T-cell (primary cell): ENCODE measurements at regions of chr6 and their contacts with region 1.

Region 1: DNA sequence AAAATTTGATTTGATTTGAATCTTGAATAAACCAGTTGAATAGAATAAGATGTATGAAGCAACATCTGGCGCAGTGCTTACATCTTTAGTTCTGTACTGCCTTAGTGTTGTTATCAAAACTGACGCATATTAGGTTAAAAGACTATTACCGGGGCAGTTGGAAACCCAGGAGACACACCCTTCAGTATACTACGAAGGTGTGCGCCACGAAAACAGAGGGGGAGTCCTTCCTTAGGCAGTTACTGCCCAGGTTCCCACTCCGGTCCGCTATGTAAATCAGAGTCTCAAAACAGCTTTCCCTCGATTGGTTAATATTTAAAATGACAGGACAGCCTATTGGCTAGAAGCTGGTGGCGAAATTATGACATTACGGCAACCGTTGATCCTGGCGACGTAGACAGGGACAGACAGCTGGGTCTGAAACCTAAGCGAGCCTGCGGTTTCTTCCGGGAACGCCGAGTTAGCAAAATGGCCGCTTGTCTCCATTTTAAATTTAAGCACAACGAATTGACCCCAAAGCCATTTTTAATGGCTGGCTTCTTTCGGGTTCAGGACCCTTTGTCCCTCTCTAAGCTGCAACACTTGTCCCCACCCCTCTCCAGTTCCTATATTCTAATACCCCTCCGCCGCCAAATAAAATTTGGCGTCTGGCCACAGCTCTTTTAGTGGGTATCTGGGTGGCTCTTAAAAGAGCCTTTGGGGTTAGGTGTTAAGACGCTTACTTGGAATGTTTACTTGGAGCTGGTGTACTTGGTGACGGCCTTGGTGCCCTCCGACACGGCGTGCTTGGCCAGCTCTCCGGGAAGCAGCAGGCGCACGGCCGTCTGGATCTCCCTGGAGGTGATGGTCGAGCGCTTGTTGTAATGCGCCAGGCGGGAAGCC is 35.8 kb downstream of the HFE start:
- DNase-seq: peak; percentile 76 to 97 (median 91)
- ATAC-seq: peak; percentile 64 to 70 (median 68)
- H3K4me3 ChIP-seq: peak overlapping the region; percentile 88 to 100
- H3K4me3 Mint-ChIP-seq: peak overlapping the region; percentile 99 to 100 (median 99)
- H3K27ac ChIP-seq: peak overlapping the region; percentile 87
- H3K27ac Mint-ChIP-seq: peak overlapping the region; percentile 99
- H3K4me1 ChIP-seq: peaks cover 10 to 15% of the 10 kb centered on the region in 2 experiments
- H3K4me1 Mint-ChIP-seq: peaks cover 32 to 47% (median 35%) of the 10 kb centered on the region in 3 donors
- H3K27me3 ChIP-seq: no peaks in the 10 kb centered on the region
- H3K27me3 Mint-ChIP-seq: no peaks in the 10 kb centered on the region

Region 2: DNA sequence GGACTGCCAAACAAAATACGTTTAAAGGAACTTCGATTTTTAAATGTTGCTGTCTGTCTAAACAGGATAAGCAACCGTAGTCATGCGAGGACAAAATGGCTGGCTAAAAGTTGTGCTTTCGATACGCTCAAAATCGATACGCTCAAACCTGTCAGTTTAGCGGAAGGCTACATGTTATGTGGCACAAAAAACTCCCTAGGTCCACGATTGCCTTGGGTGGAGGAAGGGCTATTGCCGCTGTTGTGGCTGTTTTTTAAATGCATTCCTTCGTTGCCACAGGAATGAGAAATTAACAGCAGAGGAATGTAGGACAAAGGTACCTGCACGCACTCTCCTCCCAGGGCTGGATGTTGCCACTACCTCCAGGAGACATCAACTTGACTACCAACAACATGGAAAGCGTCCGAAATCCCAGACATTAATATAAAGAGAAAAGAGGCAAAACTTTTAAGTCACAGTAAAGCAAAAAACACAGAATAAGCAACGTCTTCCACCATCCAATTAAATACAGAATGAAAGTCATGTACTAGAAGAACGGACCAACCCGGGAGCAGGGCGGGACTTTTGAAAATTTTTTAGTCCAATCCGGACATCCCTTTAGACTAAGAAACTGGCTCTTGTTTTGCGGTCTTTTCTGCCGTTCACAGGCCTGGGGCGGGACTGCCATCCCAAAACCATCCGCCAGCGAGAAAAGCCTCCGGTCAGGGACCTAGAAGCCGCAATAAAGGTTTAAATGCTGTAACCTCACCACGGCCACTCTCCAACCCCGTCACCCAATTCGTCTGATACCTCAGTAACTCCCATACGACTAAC is 68.0 kb before region 1 on chr6:
- CTCF ChIA-PET with region 1: interaction called in 1 of 2 experiments, 3 read pairs
- POLR2A ChIA-PET with region 1: interaction called, 6 to 25 read pairs
- DNase-seq: peak; percentile 63 to 95 (median 86)
- ATAC-seq: peak; percentile 60 to 73 (median 67)
- H3K4me3 ChIP-seq: peak overlapping the region; percentile 87 to 98
- H3K4me3 Mint-ChIP-seq: peak overlapping the region; percentile 95 to 97 (median 96)
- H3K27ac ChIP-seq: peak overlapping the region; percentile 96
- H3K27ac Mint-ChIP-seq: peak overlapping the region; percentile 97 to 100
- H3K4me1 ChIP-seq: peaks cover 16 to 26% of the 10 kb centered on the region in 2 experiments
- H3K4me1 Mint-ChIP-seq: peaks cover 21 to 26% (median 23%) of the 10 kb centered on the region in 3 donors
- H3K27me3 ChIP-seq: no peaks in the 10 kb centered on the region
- H3K27me3 Mint-ChIP-seq: no peaks in the 10 kb centered on the region

Region 3: DNA sequence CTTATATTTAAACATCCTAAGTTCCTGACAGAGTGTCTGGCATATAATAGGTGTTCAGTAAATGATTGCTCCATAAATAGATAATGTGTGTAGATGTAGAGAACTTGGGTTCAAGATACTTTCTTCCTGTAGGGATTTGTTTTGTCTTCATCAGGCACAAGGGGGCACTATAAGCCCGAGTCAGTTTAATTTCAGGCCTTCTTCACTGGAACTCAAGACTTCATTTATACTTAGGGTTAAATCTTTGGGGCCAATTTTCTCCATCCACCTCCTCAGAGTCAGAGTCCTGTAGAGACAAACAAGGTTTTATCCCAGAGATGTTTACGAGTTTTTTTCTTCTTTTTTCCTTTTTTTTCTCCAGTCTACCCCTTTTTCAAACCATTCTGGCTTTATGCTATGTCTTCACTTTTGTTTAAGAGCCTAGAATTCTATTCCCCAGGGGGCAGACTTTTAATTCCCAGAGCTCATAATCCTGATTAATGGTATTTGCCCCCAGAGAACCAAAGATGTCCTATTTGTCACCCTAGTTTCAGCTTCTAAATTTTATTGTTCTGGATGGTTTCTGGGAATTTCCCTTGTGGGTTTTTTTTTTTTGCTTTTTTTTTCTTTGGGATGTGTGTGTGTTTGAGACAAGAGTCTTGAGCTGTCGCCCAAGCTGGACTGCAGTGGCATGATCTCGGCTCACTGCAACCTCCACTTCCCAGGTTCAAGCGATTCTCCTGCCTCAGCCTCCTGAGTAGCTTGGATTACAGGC is 52.6 kb after region 1 on chr6:
- CTCF ChIA-PET with region 1: interaction called in 1 of 2 experiments, 5 read pairs
- POLR2A ChIA-PET with region 1: interaction called, 3 to 12 read pairs
- DNase-seq: peak in 24 of 35 experiments; percentile 30 to 85 (median 50)
- ATAC-seq: no peak
- H3K4me3 ChIP-seq: no peak overlapping the region
- H3K4me3 Mint-ChIP-seq: peak overlapping the region in 1 of 3 donors; percentile 5
- H3K27ac ChIP-seq: peak overlapping the region; percentile 37
- H3K27ac Mint-ChIP-seq: peak overlapping the region; percentile 58 to 73
- H3K4me1 ChIP-seq: peaks cover 11 to 15% of the 10 kb centered on the region in 2 experiments
- H3K4me1 Mint-ChIP-seq: peaks cover 36 to 39% (median 37%) of the 10 kb centered on the region in 3 donors
- H3K27me3 ChIP-seq: no peaks in the 10 kb centered on the region
- H3K27me3 Mint-ChIP-seq: no peaks in the 10 kb centered on the region

Region 4: GRCh38 chr6:26234421-26235296 is 111.6 kb after region 1 on chr6:
- CTCF ChIA-PET with region 1: no interaction called
- POLR2A ChIA-PET with region 1: interaction called, 8 to 39 read pairs
- DNase-seq: peak; percentile 52 to 83 (median 66)
- ATAC-seq: peak; percentile 66 to 78 (median 76)
- H3K4me3 ChIP-seq: peak overlapping the region; percentile 88 to 98
- H3K4me3 Mint-ChIP-seq: peak overlapping the region; percentile 87 to 96 (median 88)
- H3K27ac ChIP-seq: peak overlapping the region; percentile 95
- H3K27ac Mint-ChIP-seq: peak overlapping the region; percentile 96 to 100
- H3K4me1 ChIP-seq: peaks cover 13 to 19% of the 10 kb centered on the region in 2 experiments
- H3K4me1 Mint-ChIP-seq: peaks cover 32 to 39% (median 36%) of the 10 kb centered on the region in 3 donors
- H3K27me3 ChIP-seq: no peaks in the 10 kb centered on the region
- H3K27me3 Mint-ChIP-seq: no peaks in the 10 kb centered on the region

Region 5: DNA sequence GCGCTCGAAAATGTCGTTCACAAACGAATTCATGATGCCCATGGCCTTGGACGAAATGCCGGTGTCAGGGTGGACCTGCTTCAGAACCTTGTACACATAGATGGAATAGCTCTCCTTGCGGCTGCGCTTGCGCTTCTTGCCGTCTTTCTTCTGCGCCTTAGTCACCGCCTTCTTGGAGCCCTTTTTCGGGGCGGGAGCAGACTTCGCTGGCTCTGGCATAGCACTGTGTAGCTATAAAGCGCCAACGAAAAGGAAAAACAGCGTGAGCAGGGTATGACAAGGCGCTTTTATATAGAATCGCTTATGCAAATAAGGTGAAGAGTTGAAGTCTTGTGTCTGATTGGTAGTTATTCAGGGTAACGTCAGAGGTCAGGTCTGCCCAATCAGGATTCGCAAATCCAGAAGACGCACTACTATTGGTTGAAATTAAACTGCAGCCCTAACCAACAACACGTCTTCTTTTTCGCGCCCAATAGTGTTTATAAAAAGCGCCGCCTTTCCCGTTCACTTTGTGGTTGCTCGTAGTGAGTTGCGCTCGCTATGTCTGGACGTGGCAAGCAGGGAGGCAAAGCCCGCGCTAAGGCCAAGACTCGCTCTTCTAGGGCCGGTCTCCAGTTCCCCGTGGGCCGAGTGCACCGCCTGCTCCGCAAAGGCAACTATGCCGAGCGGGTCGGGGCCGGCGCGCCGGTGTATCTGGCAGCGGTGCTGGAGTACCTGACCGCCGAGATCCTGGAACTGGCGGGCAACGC is 1009.7 kb after region 1 on chr6:
- CTCF ChIA-PET with region 1: no interaction called
- POLR2A ChIA-PET with region 1: interaction called in 1 of 2 experiments, 12 read pairs
- DNase-seq: peak; percentile 76 to 98 (median 87)
- ATAC-seq: peak; percentile 80 to 87 (median 86)
- H3K4me3 ChIP-seq: peak overlapping the region; percentile 49 to 77
- H3K4me3 Mint-ChIP-seq: no peak overlapping the region
- H3K27ac ChIP-seq: peak overlapping the region; percentile 85
- H3K27ac Mint-ChIP-seq: no peak overlapping the region
- H3K4me1 ChIP-seq: peaks cover 17 to 34% of the 10 kb centered on the region in 2 experiments
- H3K4me1 Mint-ChIP-seq: peaks cover 22 to 30% (median 22%) of the 10 kb centered on the region in 3 donors
- H3K27me3 ChIP-seq: no peaks in the 10 kb centered on the region
- H3K27me3 Mint-ChIP-seq: no peaks in the 10 kb centered on the region

Region 6: DNA sequence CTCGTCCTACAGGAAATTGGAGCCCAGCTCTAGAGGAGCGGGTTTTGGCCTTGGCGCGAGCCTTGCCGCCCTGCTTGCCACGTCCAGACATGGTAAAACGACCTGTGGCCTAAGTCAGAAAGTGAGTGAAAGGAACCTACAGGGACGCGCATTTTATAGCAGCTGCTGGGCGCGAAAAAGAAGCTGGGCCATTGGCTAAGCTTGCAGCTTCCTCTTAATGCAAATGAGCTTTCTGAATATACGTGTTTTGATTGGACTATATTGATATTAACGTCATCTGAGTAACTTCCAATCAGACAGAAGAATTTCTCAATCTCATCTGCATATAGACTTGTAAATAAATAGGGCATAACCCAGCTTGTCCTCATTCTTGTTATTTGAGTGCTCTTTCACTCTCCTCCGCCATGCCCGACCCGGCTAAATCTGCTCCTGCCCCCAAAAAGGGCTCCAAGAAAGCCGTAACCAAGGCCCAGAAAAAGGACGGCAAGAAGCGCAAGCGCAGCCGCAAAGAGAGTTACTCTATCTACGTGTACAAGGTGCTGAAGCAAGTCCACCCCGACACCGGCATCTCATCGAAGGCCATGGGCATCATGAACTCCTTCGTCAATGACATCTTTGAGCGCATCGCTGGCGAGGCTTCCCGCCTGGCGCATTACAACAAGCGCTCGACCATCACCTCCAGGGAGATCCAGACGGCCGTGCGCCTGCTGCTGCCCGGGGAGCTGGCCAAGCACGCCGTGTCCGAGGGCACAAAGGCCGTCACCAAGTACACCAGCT is 1770.2 kb after region 1 on chr6:
- CTCF ChIA-PET with region 1: interaction called in 1 of 2 experiments, 4 read pairs
- POLR2A ChIA-PET with region 1: interaction called, 3 to 24 read pairs
- DNase-seq: peak; percentile 71 to 93 (median 86)
- ATAC-seq: peak; percentile 72 to 79 (median 76)
- H3K4me3 ChIP-seq: peak overlapping the region; percentile 71 to 76
- H3K4me3 Mint-ChIP-seq: no peak overlapping the region
- H3K27ac ChIP-seq: peak overlapping the region; percentile 89
- H3K27ac Mint-ChIP-seq: no peak overlapping the region
- H3K4me1 ChIP-seq: peaks cover 19 to 40% of the 10 kb centered on the region in 2 experiments
- H3K4me1 Mint-ChIP-seq: peaks cover 28 to 36% (median 29%) of the 10 kb centered on the region in 3 donors
- H3K27me3 ChIP-seq: no peaks in the 10 kb centered on the region
- H3K27me3 Mint-ChIP-seq: no peaks in the 10 kb centered on the region